Left ventricle myocardium inferior (tissue), 1 donor: ENCODE measurements at regions of chr1 and their contacts with region 1.

Region 1: DNA sequence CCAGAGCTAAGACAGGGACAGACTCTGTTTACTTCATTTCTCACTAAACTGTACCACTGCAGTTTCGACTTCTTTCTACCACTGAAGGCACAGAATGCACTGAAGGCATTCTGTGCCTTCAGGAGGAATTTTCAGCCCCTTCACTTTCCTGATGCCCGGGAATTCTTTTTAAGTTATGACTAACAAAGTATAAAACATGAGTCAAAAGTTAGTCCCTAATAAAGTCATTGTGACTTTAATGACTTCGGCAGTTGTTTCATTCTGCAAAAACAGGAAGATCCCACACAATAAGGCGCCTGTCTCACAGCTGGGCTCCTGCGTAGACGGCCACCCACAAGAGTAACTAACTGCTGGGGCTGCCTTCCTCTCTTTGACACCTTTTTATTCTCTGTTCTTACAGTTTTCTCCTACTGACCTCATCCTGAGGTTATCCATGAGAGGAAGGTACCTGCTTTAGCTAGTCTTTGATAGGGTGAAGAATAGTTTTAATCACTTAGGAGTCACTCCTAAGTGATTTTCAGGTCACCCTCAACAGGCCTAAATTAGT is 183.9 kb upstream of the SGIP1 start:
- DNase-seq: peak; percentile 40
- H3K4me3 ChIP-seq: peak overlapping the region; percentile 24
- H3K27ac ChIP-seq: peak overlapping the region; percentile 75
- H3K4me1 ChIP-seq: peaks cover 98% of the 10 kb centered on the region
- H3K27me3 ChIP-seq: no peaks in the 10 kb centered on the region
- CTCF ChIP-seq: no peak

Region 2: GRCh38 chr1:66271216-66271903 is 78.7 kb before region 1 on chr1:
- intact Hi-C with region 1: loop called (anchors 5 kb)
- DNase-seq: peak; percentile 79
- H3K4me3 ChIP-seq: peak overlapping the region; percentile 49
- H3K27ac ChIP-seq: peak overlapping the region; percentile 95
- H3K4me1 ChIP-seq: peaks cover 95% of the 10 kb centered on the region
- H3K27me3 ChIP-seq: no peaks in the 10 kb centered on the region
- CTCF ChIP-seq: no peak